Head of caudate nucleus (tissue), 42 donors: ENCODE measurements at regions of chr5 and their contacts with region 1.

Region 1: DNA sequence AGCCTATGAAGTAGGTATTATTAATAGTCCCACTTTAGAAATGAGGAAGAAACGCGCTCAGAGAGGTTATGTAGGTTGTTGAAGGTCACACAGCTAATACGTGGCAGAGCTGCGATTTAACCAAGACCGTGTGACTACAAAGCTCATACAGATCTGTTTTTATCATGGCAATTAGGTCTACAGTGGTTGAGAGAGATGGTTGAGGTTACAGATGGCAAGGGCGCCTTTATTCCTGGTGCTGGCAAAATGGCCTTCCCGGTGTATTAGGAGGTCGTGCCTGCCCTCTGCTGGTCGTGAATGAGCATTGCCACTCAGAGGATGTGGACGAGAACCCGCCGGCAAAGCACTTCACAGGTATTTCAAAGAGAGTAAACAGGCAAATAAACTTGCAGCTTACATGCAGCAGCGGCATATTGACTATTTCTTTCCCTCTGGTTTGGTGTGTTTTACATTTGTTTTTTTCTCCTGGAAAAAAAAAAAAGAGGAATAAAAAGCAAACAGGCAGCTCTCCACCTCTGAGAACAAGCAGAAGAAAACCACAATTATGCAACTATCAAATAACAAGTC is 65.3 kb upstream of the EGFLAM start:
- DNase-seq: peak; percentile 38 to 92 (median 82)

Region 2: DNA sequence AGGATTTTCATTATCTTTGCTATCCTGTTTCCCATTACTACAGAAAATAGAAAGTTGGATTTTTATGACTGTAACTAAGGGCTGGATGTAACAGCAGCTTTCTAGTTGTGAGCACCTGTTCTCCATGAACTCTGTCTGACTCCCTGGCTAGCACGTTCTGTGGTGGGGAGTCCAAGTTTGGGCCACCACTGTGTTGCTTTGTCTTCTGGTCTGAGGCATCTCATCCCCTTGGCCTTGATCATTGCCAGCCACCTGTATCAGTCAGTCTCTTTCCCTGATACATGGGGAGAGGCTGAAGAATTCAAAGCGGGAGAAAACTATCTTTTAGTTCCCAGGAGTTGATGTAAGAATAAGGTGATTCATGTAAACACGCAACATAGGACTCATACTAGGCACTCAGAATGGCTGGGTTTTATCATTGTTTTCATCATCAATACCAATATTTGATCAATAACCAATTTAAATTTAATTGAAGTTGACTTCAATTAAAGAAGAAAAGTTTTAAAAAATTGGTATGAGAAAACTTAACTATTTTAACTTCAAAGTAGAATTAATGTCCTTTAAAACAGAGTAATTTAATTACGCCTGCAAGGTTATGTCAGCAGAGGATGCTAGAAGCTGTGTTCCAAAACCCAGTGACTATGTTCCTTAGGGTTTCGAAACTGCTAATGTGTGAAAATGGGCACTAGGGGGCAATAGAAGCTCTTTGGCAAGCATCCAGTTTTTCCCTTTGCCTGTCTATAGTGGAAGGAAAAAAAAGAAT is 780.4 kb before region 1 on chr5:
- intact Hi-C with region 1: loop called (anchors 10 kb)
- DNase-seq: peak in 37 of 42 donors; percentile 7 to 86 (median 65)

Region 3: DNA sequence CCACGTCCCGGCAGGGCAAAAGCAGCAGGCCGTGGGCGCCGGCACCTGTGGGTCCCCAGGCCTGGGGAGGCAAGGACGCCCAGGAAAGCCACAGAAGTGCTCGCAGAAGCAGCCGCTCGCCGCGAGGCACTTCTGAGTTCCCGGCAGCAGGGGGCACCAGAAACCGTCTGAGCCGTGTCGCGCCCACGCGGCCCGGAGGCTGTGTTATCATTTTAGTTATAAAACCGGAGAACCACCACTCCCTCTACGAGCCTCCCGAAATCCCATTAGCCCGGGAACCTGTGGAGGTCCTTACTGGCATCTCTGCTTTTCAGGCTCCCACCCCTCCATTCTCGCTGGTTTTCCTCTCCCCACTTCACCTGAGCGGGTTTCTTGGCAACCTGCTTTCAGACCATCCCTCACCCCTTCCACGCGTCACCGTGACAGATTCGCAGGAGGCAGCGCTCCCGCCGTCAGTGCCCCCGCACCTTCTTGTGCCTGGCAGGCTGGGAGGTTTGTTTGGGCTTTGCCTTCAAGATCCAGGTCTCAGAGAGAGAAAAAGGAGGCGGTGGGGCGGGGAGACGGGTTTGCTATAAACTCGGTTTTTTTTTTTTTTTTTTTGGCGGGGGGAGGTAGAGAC is 355.6 kb before region 1 on chr5:
- intact Hi-C with region 1: loop called (anchors 5 kb)
- DNase-seq: peak; percentile 76 to 95 (median 89)

Region 4: DNA sequence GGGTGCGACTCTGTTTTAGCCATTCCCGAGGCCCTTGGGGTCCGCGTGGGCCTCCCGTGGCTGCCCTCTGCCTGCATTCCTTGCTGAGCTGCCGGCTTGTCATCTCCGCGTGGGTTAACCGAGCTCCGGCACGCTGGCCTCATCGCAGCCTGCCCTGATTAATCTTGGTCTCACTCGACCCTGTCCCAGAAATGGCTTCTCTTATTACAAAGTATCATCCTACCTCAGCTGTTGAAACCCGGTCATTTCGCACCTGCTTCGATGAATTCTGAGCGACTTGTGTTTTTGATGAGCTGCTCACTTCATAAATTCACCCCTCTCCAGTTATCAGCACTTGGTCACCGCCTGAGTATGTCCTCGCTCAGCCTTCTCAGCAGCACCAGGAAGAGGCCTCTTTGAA is 58.3 kb before region 1 on chr5:
- intact Hi-C with region 1: no loop called
- DNase-seq: no peak

Region 5: DNA sequence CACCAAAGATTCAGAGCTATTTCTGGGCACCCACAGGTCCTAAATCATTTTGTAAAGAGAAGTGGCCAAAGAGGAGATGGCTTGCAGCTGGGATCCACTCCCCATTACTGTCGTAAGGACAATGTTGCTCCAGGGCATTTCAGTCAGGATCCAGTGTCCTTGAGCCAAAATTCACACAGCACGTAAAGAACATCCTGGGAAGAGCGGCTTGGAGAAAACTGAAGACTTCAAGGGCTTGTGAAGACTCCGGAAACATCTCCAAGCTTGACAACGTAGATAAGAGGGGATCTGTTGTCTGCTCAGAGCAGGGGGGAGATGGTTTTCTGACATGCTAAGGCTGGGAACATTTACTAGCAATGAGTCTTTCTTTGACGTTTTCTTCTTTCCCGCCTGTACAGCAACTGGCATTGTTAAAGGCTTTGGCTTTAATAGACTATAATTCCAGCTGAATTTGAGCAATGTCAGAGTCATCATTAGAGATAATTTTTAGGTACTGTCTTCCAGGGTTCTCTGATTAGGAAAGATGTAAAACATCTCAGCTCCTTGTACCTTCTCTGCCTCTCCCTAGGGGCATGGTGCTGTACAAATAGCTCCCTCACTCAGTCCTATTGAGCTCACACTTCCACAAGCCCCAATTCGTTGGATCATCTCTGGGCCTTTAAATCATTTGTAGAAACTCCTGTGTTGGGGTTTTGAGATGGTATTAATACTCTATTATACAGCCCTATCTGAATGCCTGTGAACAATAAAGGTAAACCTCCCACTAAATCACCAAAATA is 104.9 kb after region 1 on chr5:
- intact Hi-C with region 1: no loop called
- DNase-seq: no peak